ENCODE measurements at regions of chr1 and their contacts with region 1.

Region 1: DNA sequence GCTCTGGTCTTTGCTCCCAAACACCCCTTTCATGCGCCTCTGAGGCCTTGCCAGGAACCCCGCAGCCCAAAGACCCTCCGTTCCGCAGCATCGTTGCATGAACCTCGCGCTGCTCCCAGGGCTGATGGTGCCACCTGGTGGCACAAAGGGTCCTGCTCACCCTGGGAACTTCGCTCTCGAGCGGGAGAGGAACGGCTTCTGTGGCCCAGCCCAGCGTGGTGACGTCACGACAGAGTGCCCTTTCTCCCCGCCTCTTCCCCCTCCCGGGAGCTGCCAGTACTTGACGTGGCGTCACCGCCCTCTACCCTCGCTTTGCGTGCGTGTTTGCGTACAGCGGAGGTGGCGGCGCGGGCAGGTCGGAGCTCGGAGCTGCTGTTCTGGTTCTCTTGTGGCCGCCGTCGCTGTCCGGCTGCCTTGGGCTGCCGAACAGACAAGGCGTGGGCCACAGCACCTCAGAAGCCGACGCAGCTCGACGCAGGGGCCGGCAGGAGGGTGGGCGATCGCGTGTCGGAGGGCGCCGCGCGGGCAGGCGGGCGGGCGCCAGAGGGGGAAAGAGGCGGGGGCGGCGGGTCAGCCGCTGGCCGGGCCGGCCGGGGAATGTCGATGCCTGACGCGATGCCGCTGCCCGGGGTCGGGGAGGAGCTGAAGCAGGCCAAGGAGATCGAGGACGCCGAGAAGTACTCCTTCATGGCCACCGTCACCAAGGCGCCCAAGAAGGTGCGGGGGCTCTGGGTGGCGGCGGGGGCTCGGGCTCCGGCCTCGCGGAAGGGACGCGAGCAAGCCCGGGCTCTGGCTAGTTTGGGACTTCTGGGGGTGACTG is at the start of gene AHCYL1:
- DNase-seq: peak; percentile 99
- H3K4me3 ChIP-seq: peak within 1 kb of the TSS; percentile 77
- H3K27ac ChIP-seq: peak within 1 kb of the TSS; percentile 93
- H3K4me1 ChIP-seq: peaks cover 20% of the 10 kb centered on the region
- H3K27me3 ChIP-seq: no peaks in the 10 kb centered on the region
- CTCF ChIP-seq: peak; percentile 99
- total RNA-seq, gene AHCYL1: 89.6 and 107 TPM in 2 replicates

Region 2: GRCh38 chr1:109548321-109549267 is 436.1 kb before region 1 on chr1 and contains the start of gene GNAI3:
- CTCF ChIA-PET with region 1: interaction called, 12 read pairs
- POLR2A ChIA-PET with region 1: no interaction called
- intact Hi-C with region 1: loop called (anchors 1 kb)
- DNase-seq: peak; percentile 98
- H3K4me3 ChIP-seq: peak within 1 kb of the TSS; percentile 95
- H3K27ac ChIP-seq: peak within 1 kb of the TSS; percentile 94
- H3K4me1 ChIP-seq: peaks cover 29% of the 10 kb centered on the region
- H3K27me3 ChIP-seq: no peaks in the 10 kb centered on the region
- CTCF ChIP-seq: no peak
- total RNA-seq, gene GNAI3: 11.1 and 12.8 TPM in 2 replicates

Region 3: GRCh38 chr1:109643385-109644230 is 341.1 kb before region 1 on chr1:
- CTCF ChIA-PET with region 1: interaction called, 9 read pairs
- POLR2A ChIA-PET with region 1: no interaction called
- intact Hi-C with region 1: loop called (anchors 5 kb)
- DNase-seq: peak; percentile 85
- H3K4me3 ChIP-seq: no peak overlapping the region
- H3K27ac ChIP-seq: peak overlapping the region; percentile 40
- H3K4me1 ChIP-seq: peaks cover 14% of the 10 kb centered on the region
- H3K27me3 ChIP-seq: no peaks in the 10 kb centered on the region
- CTCF ChIP-seq: peak; percentile 94

Region 4: GRCh38 chr1:109773146-109773899 is 211.3 kb before region 1 on chr1:
- CTCF ChIA-PET with region 1: interaction called, 95 read pairs
- POLR2A ChIA-PET with region 1: no interaction called
- intact Hi-C with region 1: loop called (anchors 1 kb)
- DNase-seq: peak; percentile 95
- H3K4me3 ChIP-seq: no peak overlapping the region
- H3K27ac ChIP-seq: no peak overlapping the region
- H3K4me1 ChIP-seq: peaks cover 7% of the 10 kb centered on the region
- H3K27me3 ChIP-seq: no peaks in the 10 kb centered on the region
- CTCF ChIP-seq: peak; percentile 97

Region 5: DNA sequence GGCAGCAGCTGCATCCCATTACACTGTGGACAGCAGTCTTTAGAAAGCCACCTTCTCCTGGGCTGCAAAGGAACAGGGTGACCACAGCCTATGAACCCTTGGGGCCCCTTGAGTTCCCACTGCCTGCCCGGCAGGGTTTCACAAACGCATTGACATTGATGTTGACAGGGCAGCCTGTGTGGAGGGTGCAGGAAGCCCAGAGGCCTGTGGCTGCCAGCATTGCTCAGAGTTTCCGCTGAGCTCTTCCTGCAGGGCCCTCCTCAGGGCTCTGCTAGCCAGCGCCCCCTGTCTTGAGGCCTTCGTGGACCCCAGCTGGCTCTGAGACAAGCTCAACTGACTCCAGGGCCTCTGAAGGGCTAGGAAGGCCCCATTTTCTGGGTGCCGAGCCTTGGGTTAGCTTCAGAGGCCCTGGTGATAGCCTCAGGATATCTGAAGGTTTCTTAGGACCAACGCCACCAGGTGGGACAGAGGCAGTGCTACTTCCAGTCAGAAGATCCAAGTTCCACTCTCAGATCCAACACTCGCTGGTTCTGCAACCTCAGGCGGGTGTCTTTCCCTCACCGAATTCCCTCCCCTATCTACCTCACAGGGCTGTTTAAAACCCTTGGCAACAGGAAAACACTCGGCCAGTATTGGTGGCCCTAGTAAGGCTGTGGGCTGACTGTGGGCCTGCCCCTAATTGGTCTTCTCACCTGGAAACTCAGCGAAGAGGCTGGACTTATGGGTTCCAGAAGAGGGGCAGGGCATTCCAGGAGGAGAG is 193.8 kb before region 1 on chr1:
- CTCF ChIA-PET with region 1: interaction called, 24 read pairs
- POLR2A ChIA-PET with region 1: interaction called, 3 read pairs
- intact Hi-C with region 1: no loop called
- DNase-seq: peak; percentile 33
- H3K4me3 ChIP-seq: no peak overlapping the region
- H3K27ac ChIP-seq: no peak overlapping the region
- H3K4me1 ChIP-seq: peaks cover 37% of the 10 kb centered on the region
- H3K27me3 ChIP-seq: no peaks in the 10 kb centered on the region
- CTCF ChIP-seq: peak; percentile 34; the same call in 1 of the 2 replicates

Region 6: DNA sequence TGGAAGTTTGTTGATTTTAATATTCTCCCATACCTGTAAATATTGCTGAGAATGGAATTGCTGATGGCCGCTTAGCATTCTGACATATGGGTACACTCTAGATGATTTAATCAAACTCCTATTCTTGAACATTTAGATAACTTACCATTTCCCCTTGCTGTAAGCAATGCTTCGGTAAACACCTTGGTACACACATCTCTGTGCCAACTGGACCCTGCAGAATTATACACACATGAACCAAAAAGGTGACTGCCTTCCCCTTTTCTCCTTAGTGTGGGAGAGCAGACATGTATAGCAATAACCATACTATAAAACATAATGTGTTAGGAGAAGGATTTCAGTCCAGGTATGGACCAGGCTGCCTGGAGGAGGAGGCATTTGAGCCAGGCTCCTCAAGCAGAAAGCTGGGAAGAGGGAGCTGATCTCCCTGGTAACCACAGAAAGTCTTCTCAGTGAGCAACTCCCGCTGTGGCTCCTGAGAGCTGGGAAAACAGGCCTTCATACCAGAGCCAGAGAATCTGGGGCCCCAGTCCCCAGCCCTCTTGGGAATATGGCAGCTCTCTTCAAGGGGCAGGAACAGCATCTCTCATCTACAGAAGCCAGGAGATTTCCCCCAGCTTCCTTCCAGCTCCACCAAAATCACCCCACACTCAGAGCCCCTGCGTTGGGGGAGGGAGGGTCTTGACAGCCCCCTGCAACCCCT is 107.9 kb before region 1 on chr1:
- CTCF ChIA-PET with region 1: interaction called, 15 read pairs
- POLR2A ChIA-PET with region 1: no interaction called
- intact Hi-C with region 1: no loop called
- DNase-seq: no peak
- H3K4me3 ChIP-seq: no peak overlapping the region
- H3K27ac ChIP-seq: no peak overlapping the region
- H3K4me1 ChIP-seq: no peaks in the 10 kb centered on the region
- H3K27me3 ChIP-seq: no peaks in the 10 kb centered on the region
- CTCF ChIP-seq: no peak

Region 7: DNA sequence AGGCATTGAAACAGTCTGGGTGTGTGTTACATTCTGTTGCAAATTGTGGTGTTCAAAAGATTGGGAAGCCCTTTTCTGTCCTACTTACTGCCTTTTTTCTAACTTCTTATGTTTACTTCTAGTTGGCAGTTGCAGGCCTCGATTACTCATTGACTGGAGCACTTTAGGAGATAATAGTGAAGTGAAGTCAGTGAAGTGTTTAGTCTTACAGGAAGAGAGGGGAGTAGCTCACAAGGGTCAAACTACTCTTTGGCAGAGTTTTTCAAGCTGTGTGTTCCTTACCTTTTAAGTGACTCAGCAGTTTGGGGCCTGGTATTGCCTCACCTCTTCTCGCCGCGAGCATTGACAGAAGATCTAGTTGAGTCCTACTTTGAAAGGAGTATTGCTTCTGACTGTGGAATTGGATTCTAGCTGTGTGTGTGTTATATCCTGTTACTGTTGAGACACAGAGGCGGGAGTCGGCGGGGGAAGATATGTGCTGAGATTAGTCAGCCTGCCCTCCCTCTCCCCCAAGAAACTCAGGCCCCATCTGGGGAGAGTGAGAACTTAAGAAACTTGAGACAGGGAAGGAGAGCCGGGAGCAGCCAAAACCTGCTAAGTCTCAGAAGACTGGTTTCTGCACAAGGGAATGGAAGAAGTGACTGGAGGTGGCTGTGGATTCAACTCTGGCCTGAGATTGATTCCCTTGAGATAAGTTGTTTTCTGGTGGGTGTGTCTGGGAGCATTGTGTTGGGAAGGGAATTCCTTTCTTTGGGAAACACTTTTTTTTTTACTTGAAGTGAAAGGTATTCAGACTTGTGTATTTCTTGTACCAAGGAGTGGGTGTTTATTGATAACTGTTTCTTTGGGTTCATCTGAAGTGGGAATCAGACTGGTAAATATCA is 19.3 kb after region 1 on chr1:
- CTCF ChIA-PET with region 1: interaction called, 5 read pairs
- POLR2A ChIA-PET with region 1: interaction called, 11 read pairs
- intact Hi-C with region 1: no loop called
- DNase-seq: peak; percentile 93
- H3K4me3 ChIP-seq: peak overlapping the region; percentile 18
- H3K27ac ChIP-seq: peak overlapping the region; percentile 81
- H3K4me1 ChIP-seq: peaks cover 54% of the 10 kb centered on the region
- H3K27me3 ChIP-seq: no peaks in the 10 kb centered on the region
- CTCF ChIP-seq: no peak

Measured in A673 (cell line).